ENCODE measurements at regions of chr7 and their contacts with region 1.

Region 1: GRCh38 chr7:128968624-128969023 is 30.9 kb downstream of the IRF5 start:
- DNase-seq: no peak

Region 2: GRCh38 chr7:128954830-128955802 is 13.5 kb before region 1 on chr7:
- intact Hi-C with region 1: loop called in 1 of 2 experiments (anchors 1 kb)
- DNase-seq: no peak

Region 3: DNA sequence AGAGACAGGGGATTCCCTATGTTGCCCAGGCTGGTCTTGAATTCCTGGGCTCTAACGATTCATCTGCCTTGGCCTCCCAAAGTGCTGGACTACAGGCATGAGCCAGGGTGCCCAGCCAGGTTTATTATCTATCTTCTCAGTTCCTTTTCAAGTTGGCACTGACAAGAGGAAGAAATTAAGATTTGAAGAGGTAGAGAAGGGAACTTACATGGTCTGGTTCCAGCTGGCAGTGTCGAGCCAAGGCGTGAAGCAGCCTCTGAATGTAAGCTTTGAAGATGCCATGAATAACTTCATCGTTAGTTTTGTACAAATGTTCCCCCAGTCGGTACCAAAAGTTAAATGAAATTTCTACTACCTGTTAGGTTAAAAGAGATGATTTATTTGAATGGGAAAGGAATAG is 28.6 kb after region 1 on chr7:
- intact Hi-C with region 1: no loop called
- DNase-seq: no peak

Region 4: GRCh38 chr7:129210256-129210988 is 241.8 kb after region 1 on chr7:
- intact Hi-C with region 1: no loop called
- DNase-seq: peak; percentile 94